ENCODE measurements at regions of chr17 and their contacts with region 1.

Region 1: DNA sequence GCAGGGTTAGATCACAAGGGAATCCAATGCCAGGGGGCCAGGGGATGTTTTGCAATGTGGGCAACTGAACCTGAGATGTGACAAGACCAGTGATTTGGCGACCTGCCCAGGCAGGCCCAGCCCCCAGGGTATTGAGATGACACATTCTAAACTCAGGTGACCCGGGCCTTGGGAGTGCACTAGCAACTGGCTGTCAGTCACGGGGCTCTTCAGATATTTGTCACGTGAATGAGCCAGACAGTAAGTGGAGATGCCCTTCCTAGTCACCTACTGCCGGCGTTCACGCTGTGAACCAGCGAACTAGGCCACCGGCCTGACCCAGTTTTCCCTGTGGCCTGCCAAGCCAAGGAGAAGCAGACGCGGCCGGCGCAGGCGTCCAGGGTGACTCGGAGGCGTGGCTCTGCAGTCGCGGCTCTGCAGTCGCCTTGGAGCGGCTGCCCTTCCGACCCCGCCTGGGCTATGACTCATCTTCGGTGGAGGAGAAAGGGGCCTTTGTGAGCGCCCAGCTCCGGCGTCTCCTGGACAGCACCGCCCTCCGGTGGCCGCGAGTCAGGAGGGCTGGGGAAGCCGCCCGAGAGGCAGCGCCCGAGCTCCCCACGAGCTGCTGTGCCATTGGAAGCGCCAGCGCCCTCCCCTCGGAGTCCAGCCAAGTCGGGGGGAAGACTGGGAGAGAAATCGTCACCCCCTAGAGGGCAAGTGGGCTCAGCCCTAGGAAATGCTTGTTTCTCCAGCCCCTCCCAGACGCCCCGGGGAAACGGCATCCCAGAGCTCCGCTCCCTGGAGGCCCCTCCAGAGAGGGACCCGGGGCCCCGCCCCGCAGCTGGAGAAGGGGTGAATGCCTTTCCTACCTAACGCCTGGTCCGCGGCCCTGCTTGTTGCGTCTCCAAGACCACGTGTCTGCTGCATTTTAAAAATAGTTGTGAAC is 38.8 kb downstream of the WSB1 start:
- DNase-seq: peak; percentile 70 to 93 (median 80)
- ATAC-seq: peak; percentile 84 to 91
- H3K4me3 Mint-ChIP-seq: peak overlapping the region; percentile 75 to 89 (median 84)
- H3K27ac Mint-ChIP-seq: peak overlapping the region; percentile 51 to 98 (median 83)
- H3K4me1 Mint-ChIP-seq: peaks cover 8 to 34% (median 23%) of the 10 kb centered on the region in 4 donors
- H3K27me3 Mint-ChIP-seq: no peaks in the 10 kb centered on the region

Region 2: DNA sequence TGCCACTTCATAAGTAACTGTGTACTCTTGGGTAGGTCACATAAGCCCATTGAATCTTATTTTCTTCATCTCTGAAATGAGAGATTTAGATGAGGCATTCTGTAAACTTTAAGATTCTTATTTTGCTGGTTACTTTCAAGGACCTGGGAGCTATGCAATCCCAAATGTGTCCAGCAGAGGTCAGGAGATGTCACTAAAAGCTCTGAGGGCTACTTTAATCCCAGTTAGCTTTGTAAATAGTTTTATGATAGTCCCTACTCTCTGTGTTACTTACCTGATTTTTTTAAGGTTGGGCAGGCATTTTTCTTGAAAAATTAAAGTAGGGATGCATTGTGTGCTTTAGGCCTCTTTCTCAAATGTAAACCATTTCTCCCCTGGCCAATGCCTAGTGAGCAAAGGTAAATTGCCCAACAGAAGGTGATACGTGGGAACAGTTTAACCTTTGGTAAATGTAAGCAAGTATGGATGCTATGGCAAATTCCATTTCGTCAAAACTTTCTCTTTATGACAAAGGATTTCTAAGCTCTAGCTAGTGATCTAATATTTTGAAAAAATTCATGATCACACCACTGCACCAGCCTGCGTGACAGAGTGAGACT is 95.9 kb before region 1 on chr17:
- POLR2A ChIA-PET with region 1: interaction called, 11 read pairs
- DNase-seq: peak; percentile 46 to 82 (median 66)
- ATAC-seq: peak; percentile 70 to 76
- H3K4me3 Mint-ChIP-seq: no peak overlapping the region
- H3K27ac Mint-ChIP-seq: no peak overlapping the region
- H3K4me1 Mint-ChIP-seq: peaks cover 0 to 8% (median 0%) of the 10 kb centered on the region in 4 donors
- H3K27me3 Mint-ChIP-seq: peaks cover 0 to 5% (median 1%) of the 10 kb centered on the region in 5 donors

Region 3: GRCh38 chr17:27293898-27294688 is 38.7 kb before region 1 on chr17 and contains the start of gene WSB1:
- POLR2A ChIA-PET with region 1: interaction called, 30 read pairs
- DNase-seq: peak; percentile 86 to 95 (median 93)
- ATAC-seq: peak; percentile 85 to 88
- H3K4me3 Mint-ChIP-seq: peak within 1 kb of the TSS; percentile 96 to 100 (median 99)
- H3K27ac Mint-ChIP-seq: peak within 1 kb of the TSS; percentile 93 to 100 (median 99)
- H3K4me1 Mint-ChIP-seq: peaks cover 13 to 58% (median 46%) of the 10 kb centered on the region in 4 donors
- H3K27me3 Mint-ChIP-seq: no peaks in the 10 kb centered on the region
- polyA plus RNA-seq, gene WSB1: 128 to 186 (median 132) TPM

Region 4: DNA sequence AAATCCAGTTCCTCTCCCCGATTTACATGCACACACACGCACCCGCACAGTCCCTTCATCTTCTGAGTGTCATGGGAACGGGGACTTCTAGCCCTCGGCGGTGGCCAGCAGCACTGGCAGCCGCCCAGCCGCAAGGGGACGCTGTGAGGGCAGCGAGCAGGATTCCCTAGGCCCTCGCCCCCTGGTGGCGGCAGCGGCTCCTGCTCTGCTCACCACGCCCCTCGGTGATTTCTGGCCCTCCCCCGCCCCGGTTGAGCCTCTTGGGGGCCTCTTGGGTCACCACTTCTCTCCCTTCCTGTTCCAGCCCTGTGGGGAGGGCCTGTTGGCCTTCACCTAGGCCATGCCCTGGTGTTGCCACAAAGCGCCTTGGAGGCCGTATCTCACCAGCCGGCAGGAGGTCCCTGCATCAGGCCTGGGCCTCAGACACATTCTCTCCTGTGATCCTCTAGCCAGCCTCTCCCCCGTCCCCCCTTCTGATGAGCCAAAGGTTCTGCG is 48.3 kb after region 1 on chr17:
- POLR2A ChIA-PET with region 1: no interaction called
- DNase-seq: peak; percentile 43 to 74 (median 58)
- ATAC-seq: peak; percentile 74 to 80
- H3K4me3 Mint-ChIP-seq: peak overlapping the region in 1 of 10 donors; percentile 10
- H3K27ac Mint-ChIP-seq: no peak overlapping the region
- H3K4me1 Mint-ChIP-seq: peaks cover 0 to 6% (median 2%) of the 10 kb centered on the region in 4 donors
- H3K27me3 Mint-ChIP-seq: peaks cover 13 to 34% (median 30%) of the 10 kb centered on the region in 5 donors

Region 5: DNA sequence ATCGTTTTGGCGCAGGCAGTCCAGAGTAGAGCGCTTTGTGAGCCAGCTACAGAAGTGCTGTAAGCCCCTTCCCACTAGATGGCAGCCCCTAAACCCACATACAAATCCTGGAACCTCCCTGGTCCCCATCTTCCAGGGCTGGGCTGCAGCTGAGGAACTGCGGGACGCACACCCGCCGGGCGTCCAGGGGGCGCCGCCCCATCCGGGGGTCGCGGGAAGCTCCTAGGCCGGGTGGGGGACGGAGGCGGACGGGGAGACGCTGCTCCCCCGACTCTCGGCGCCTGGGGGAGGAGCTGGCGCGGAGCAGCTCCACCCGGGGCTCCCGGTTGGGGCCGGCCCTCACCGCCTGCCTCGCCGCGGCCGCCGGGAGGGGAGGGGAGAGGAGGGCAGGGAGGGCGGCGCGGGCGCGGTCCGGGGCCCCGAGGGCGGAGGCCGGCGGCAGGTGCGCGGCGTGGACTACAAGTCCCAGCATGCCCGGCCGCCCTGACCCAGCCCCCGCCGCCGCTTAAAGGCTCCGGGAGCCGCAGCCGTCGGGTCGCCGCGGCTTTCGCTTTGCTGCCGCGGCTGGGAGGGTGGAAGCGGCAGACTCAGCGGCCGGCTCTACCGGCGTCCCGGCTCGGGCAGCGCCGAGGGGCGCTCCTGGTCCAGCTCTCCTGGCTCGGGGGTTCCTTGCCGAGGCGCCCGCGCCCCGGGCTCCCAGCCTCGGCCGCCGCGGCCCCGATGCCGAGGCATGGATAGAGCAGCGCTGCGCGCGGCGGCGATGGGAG is 123.3 kb after region 1 on chr17 and contains the start of gene KSR1:
- POLR2A ChIA-PET with region 1: no interaction called
- DNase-seq: peak; percentile 69 to 88 (median 76)
- ATAC-seq: peak; percentile 92 to 93
- H3K4me3 Mint-ChIP-seq: peak within 1 kb of the TSS; percentile 78 to 95 (median 88)
- H3K27ac Mint-ChIP-seq: peak within 1 kb of the TSS; percentile 68 to 93 (median 82)
- H3K4me1 Mint-ChIP-seq: peaks cover 11 to 33% (median 22%) of the 10 kb centered on the region in 4 donors
- H3K27me3 Mint-ChIP-seq: no peaks in the 10 kb centered on the region
- polyA plus RNA-seq, gene KSR1: 0.73 to 2.0 (median 0.91) TPM